ENCODE measurements at regions of chr6 and their contacts with region 1.

Region 1: GRCh38 chr6:43758617-43759050 is 11.4 kb upstream of the VEGFA start:
- DNase-seq: peak; percentile 21
- H3K4me3 ChIP-seq: no peak overlapping the region
- H3K27ac ChIP-seq: no peak overlapping the region
- H3K4me1 ChIP-seq: peaks cover 5% of the 10 kb centered on the region
- H3K27me3 ChIP-seq: peaks cover 8 to 14% of the 10 kb centered on the region in 2 experiments
- CTCF ChIP-seq: peak; percentile 60 to 81
- POLR2A ChIP-seq: no peak

Region 2: DNA sequence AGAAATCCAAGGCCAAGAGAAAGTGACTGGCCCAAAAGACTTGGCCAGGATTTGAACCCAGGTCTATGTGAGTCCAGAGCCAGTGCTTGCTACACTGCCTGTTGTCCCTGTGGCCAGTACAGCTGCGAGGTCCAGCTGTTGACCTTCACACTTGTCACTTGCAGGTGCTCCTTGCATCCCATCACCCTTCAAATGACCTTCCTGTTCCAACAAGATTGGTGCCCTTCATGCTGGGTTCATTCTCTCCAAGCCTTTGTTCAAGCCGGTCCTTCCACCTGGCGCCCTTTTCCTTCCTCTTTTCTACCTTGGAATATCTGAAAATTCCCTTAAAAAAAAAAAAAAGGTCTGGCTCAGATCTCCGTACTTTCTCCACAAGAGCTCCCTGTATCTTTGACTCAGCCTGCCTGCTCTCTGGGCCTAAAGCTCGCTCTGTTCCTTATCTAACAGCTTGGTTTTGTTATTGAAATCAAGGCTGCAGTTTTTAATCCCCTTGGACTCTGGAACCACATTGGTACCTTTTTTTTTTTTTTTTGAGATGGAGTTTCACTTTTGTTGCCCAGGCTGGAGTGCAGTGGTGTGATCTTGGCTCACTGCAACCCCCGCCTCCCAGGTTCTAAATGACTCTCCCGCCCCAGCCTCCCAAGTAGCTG is 48.9 kb before region 1 on chr6:
- CTCF ChIA-PET with region 1: no interaction called
- POLR2A ChIA-PET with region 1: no interaction called
- dilution Hi-C with region 1: no loop called
- intact Hi-C with region 1: no loop called
- DNase-seq: no peak
- H3K4me3 ChIP-seq: no peak overlapping the region
- H3K27ac ChIP-seq: no peak overlapping the region
- H3K4me1 ChIP-seq: peaks cover 33% of the 10 kb centered on the region
- H3K27me3 ChIP-seq: no peaks in the 10 kb centered on the region
- CTCF ChIP-seq: no peak
- POLR2A ChIP-seq: no peak

Region 3: GRCh38 chr6:43723737-43724295 is 34.8 kb before region 1 on chr6:
- CTCF ChIA-PET with region 1: interaction called, 5 read pairs
- POLR2A ChIA-PET with region 1: no interaction called
- dilution Hi-C with region 1: no loop called
- intact Hi-C with region 1: loop called (anchors 2 kb)
- DNase-seq: peak; percentile 56
- H3K4me3 ChIP-seq: no peak overlapping the region
- H3K27ac ChIP-seq: no peak overlapping the region
- H3K4me1 ChIP-seq: no peaks in the 10 kb centered on the region
- H3K27me3 ChIP-seq: no peaks in the 10 kb centered on the region
- CTCF ChIP-seq: peak; percentile 61 to 73
- POLR2A ChIP-seq: no peak

Region 4: GRCh38 chr6:43742931-43743632 is 15.6 kb before region 1 on chr6:
- CTCF ChIA-PET with region 1: interaction called, 12 read pairs
- POLR2A ChIA-PET with region 1: no interaction called
- dilution Hi-C with region 1: no loop called
- intact Hi-C with region 1: no loop called
- DNase-seq: no peak
- H3K4me3 ChIP-seq: no peak overlapping the region
- H3K27ac ChIP-seq: no peak overlapping the region
- H3K4me1 ChIP-seq: no peaks in the 10 kb centered on the region
- H3K27me3 ChIP-seq: no peaks in the 10 kb centered on the region
- CTCF ChIP-seq: no peak
- POLR2A ChIP-seq: no peak

Region 5: DNA sequence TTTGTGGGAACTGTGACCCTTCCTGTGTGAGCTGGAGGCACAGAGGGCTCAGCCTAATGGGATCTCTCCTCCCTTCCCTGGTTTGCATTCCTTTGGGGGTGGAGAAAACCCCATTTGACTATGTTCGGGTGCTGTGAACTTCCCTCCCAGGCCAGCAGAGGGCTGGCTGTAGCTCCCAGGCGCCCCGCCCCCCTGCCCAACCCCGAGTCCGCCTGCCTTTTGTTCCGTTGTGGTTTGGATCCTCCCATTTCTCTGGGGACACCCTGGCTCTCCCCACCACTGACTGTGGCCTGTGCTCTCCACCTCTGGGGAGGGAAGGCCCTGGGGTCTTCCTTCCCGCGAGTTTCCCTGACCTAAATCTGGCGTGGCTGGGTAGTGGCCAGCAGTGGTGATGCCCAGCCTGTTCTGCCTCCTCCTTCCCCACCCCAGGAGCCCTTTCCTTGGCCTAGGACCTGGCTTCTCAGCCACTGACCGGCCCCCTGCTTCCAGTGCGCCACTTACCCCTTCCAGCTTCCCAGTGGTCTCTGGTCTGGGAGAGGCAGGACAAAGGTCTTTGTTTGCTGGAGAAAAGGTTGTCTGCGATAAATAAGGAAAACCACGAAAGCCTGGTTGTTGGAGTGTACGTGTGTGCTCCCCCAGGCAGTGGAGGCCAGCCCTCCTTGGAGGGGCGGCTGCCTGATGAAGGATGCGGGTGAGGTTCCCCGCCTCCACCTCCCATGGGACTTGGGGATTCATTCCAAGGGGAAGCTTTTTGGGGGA is 16.3 kb after region 1 on chr6:
- CTCF ChIA-PET with region 1: interaction called, 21 read pairs
- POLR2A ChIA-PET with region 1: no interaction called
- dilution Hi-C with region 1: no loop called
- intact Hi-C with region 1: no loop called
- DNase-seq: peak; percentile 55
- H3K4me3 ChIP-seq: peak overlapping the region in 1 of 3 experiments; percentile 8
- H3K27ac ChIP-seq: no peak overlapping the region
- H3K4me1 ChIP-seq: peaks cover 19% of the 10 kb centered on the region
- H3K27me3 ChIP-seq: no peaks in the 10 kb centered on the region
- CTCF ChIP-seq: peak; percentile 80 to 92
- POLR2A ChIP-seq: no peak

Measured in endothelial cell of umbilical vein (primary cell).